A673 (cell line): ENCODE measurements at regions of chr1 and their contacts with region 1.

Region 1: GRCh38 chr1:38018864-38019343 is 6.4 kb downstream of the UTP11 start:
- DNase-seq: peak; percentile 70
- H3K4me3 ChIP-seq: no peak overlapping the region
- H3K27ac ChIP-seq: no peak overlapping the region
- H3K4me1 ChIP-seq: peaks cover 50% of the 10 kb centered on the region
- H3K27me3 ChIP-seq: no peaks in the 10 kb centered on the region
- CTCF ChIP-seq: peak; percentile 72

Region 2: GRCh38 chr1:37989361-37989930 is 29.5 kb before region 1 on chr1:
- CTCF ChIA-PET with region 1: no interaction called
- POLR2A ChIA-PET with region 1: no interaction called
- intact Hi-C with region 1: loop called (anchors 1 kb)
- DNase-seq: no peak
- H3K4me3 ChIP-seq: peak overlapping the region; percentile 73
- H3K27ac ChIP-seq: peak overlapping the region; percentile 75
- H3K4me1 ChIP-seq: peaks cover 3% of the 10 kb centered on the region
- H3K27me3 ChIP-seq: no peaks in the 10 kb centered on the region
- CTCF ChIP-seq: no peak

Region 3: GRCh38 chr1:38166473-38166872 is 147.6 kb after region 1 on chr1:
- CTCF ChIA-PET with region 1: no interaction called
- POLR2A ChIA-PET with region 1: interaction called, 13 read pairs
- intact Hi-C with region 1: no loop called
- DNase-seq: no peak
- H3K4me3 ChIP-seq: no peak overlapping the region
- H3K27ac ChIP-seq: no peak overlapping the region
- H3K4me1 ChIP-seq: no peaks in the 10 kb centered on the region
- H3K27me3 ChIP-seq: no peaks in the 10 kb centered on the region
- CTCF ChIP-seq: no peak

Region 4: DNA sequence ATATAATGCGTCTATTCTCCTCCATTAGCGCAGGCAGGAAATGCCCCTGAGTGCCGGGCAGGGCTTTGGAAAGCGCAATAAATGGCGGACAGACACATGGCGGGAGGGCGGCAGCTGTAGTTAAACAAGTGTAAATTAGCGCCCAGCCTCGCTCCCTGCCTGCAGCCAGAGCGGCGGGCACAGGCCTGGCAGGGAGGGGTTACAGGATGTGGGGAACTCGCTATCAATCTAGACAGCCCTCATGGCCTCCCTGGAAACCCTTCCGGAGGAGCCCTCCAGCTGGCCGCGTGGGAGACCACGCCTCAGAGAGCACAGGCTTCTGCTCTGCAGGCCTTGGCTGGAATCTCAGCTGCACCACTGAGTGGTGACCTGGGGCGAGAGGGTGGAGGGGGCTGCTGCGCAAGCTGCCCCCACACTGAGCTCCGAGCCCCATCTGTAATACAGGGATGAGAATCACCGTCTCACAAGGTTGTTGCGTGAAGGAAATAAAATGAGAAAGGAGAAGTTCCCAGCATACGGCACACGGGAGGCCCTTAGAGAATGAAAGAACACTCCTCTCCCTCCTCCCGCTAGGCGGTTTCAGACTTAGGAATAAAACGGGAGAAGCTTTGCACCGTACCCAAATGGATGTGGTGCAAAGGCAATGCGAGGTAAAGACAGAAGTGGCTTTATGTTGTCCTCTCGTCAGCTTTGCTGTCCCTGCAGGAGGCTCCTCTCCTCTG is 194.9 kb after region 1 on chr1:
- CTCF ChIA-PET with region 1: no interaction called
- POLR2A ChIA-PET with region 1: no interaction called
- intact Hi-C with region 1: no loop called
- DNase-seq: no peak
- H3K4me3 ChIP-seq: no peak overlapping the region
- H3K27ac ChIP-seq: no peak overlapping the region
- H3K4me1 ChIP-seq: no peaks in the 10 kb centered on the region
- H3K27me3 ChIP-seq: no peaks in the 10 kb centered on the region
- CTCF ChIP-seq: no peak

Region 5: GRCh38 chr1:38246955-38247952 is 228.3 kb after region 1 on chr1:
- CTCF ChIA-PET with region 1: no interaction called
- POLR2A ChIA-PET with region 1: no interaction called
- intact Hi-C with region 1: no loop called
- DNase-seq: no peak
- H3K4me3 ChIP-seq: no peak overlapping the region
- H3K27ac ChIP-seq: no peak overlapping the region
- H3K4me1 ChIP-seq: no peaks in the 10 kb centered on the region
- H3K27me3 ChIP-seq: no peaks in the 10 kb centered on the region
- CTCF ChIP-seq: no peak